OCI-LY7 (cell line): ENCODE measurements at regions of chr1 and their contacts with region 1.

Region 1: DNA sequence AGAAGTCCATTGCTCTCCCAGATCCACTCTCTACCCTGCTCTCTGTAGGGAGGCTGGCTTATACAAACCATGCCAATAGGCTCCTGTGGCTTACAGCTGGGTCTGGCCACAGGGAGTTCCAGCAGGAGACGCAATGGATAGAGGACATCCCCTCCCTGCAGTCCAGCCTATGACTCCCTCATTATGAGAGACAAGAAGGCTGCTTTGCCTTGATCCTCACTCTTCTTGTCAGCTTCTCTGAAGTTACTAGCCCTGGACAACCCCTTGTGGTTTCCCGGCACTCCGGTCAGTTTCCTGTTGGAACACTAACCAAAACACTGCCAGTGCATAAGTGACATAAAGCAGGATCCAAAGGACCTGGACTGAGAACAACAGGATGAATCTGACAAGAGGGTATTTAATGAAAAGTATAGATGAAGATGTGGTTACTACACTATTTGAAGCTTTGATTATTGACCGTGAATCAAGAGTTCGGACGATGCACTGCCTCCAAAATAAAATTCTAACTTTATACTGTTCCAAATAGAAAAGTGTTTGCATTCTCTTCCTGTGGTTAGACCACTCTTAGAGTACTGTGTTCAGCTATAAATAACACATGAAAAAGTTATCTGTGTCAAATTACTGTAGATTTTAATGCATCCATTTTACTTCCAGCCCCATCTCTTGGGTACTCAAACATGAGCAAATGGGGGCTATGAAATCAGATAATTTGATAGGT is 32.7 kb upstream of the ZNF326 start:
- DNase-seq: no peak
- H3K4me3 ChIP-seq: no peak overlapping the region
- H3K27ac ChIP-seq: no peak overlapping the region
- H3K4me1 ChIP-seq: peaks cover 8% of the 10 kb centered on the region
- CTCF ChIP-seq: no peak

Region 2: DNA sequence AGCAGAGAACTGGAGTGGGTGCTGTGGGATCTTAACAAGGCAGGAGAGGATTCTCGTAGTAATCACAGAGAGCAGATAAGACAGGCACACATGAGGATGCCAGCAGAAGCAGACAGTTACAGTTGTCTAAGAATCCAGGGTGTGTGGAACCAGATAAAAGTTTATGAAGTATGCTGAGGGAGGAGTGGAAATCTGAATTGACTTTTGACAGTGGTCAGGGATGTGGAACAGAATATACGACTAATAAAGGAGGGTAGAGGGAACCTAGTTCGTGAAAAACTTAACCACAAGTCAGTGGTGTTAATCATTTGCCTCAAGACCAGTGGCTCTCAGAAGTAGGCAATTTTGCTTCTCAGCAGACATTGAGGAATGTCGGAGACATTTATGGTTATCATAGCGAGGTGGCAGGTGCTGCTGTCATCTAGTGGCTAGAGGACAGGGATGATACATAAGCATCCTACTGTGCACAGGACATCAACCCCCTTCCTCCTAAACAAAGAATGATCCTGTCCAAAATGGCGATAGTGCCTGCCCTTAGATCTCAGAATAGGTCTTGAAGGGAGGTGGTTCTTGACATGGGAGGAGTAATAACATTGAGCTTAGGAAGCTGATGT is 138.4 kb before region 1 on chr1:
- CTCF ChIA-PET with region 1: no interaction called
- POLR2A ChIA-PET with region 1: no interaction called
- intact Hi-C with region 1: no loop called
- DNase-seq: peak; percentile 19
- H3K4me3 ChIP-seq: peak overlapping the region; percentile 74
- H3K27ac ChIP-seq: peak overlapping the region; percentile 2
- H3K4me1 ChIP-seq: peaks cover 37% of the 10 kb centered on the region
- CTCF ChIP-seq: no peak

Region 3: DNA sequence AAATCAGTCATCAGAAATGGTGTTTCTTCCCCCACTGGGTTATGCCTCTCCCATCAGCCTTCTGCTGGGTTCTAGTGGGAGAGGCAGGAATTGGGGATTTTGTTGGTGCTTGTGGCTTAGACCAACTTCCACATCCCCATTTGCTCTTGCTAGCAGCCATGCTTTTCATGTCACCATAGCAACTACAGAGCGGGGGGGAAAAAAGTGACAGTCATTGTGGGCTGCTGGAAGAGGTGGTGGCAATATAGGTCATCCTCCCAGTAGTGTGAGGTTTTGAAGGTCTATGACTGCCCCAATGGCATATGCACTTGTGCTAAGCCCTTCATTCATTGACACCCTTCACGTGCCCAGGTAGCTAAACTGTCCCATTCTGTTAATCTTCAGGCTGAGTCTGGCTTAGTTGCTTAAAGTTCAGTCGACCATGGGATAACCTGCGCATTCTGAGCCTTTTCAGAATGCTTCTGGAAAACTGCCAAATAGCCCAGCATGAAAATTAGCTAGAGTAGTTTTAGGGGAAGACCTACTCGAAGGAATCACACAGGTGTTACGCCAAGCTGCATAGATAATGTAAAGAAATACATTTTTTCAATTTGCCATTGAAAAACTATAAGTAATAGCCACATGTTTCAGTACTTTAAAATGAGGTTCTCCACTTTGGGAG is 20.9 kb before region 1 on chr1:
- CTCF ChIA-PET with region 1: no interaction called
- POLR2A ChIA-PET with region 1: no interaction called
- intact Hi-C with region 1: no loop called
- DNase-seq: peak; percentile 14
- H3K4me3 ChIP-seq: no peak overlapping the region
- H3K27ac ChIP-seq: no peak overlapping the region
- H3K4me1 ChIP-seq: peaks cover 11% of the 10 kb centered on the region
- CTCF ChIP-seq: no peak

Region 4: DNA sequence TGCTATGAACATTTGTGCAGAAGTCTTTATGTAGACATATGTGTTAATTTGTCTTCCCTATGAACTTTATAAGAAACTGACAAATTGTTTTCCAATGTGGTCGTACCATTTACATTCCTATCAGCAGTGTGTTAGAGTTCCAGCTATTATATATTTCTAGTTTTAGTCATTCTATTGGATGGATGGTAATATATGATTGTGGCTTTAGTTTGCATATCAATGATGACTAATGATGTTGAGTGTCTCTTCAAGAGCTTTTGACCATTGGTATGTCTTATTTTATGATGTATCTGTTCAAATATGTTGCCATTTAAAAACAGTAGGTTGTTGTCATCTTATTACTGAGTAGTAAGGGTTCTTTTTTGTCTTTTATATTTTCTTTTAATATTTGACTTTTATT is 16.6 kb after region 1 on chr1:
- CTCF ChIA-PET with region 1: no interaction called
- POLR2A ChIA-PET with region 1: interaction called, 14 read pairs
- intact Hi-C with region 1: no loop called
- DNase-seq: no peak
- H3K4me3 ChIP-seq: no peak overlapping the region
- H3K27ac ChIP-seq: no peak overlapping the region
- H3K4me1 ChIP-seq: no peaks in the 10 kb centered on the region
- CTCF ChIP-seq: no peak